ENCODE measurements at regions of chr1 and their contacts with region 1.

Region 1: DNA sequence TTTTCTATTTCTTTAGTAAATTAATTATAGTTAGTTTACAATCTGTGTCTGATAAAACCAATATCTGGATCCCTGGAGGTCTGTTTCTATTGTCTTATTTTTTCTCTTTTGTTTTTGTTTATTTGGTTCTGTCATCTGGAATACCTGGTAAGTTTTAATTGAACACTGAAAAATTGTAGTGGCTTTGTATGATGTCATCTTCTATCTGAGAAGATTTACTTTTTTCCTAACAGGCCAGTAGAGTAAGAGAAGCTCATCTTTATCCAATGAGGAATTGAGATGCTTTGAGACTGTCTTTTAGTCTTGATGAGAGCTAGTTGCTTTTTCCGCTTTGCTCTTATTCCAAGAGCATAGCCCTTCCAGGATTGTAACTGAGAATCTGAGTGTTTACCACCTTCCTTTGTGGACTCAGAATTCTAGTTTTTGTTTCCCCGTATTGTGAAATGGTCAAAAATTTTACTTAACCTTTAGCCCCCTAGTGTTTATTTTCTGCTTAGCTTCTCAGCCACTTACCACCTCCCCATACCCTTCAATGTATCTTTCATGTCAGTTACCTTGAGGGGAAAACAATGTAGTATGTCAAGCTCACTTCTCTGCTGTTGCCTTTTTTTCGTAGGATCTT is 25.0 kb downstream of the PTGFRN start:
- DNase-seq: no peak
- H3K4me3 Mint-ChIP-seq: no peak overlapping the region
- H3K27ac Mint-ChIP-seq: peak overlapping the region; percentile 23
- H3K4me1 Mint-ChIP-seq: peaks cover 34% of the 10 kb centered on the region
- H3K27me3 Mint-ChIP-seq: no peaks in the 10 kb centered on the region

Region 2: GRCh38 chr1:116377541-116378529 is 556.9 kb before region 1 on chr1:
- intact Hi-C with region 1: loop called (anchors 5 kb)
- DNase-seq: peak; percentile 28
- H3K4me3 Mint-ChIP-seq: peak overlapping the region; percentile 78
- H3K27ac Mint-ChIP-seq: peak overlapping the region; percentile 75
- H3K4me1 Mint-ChIP-seq: peaks cover 66% of the 10 kb centered on the region
- H3K27me3 Mint-ChIP-seq: no peaks in the 10 kb centered on the region

Region 3: GRCh38 chr1:116737020-116737854 is 197.5 kb before region 1 on chr1:
- intact Hi-C with region 1: loop called (anchors 1 kb)
- DNase-seq: peak; percentile 70
- H3K4me3 Mint-ChIP-seq: peak overlapping the region; percentile 61
- H3K27ac Mint-ChIP-seq: peak overlapping the region; percentile 100
- H3K4me1 Mint-ChIP-seq: peaks cover 69% of the 10 kb centered on the region
- H3K27me3 Mint-ChIP-seq: no peaks in the 10 kb centered on the region

Region 4: DNA sequence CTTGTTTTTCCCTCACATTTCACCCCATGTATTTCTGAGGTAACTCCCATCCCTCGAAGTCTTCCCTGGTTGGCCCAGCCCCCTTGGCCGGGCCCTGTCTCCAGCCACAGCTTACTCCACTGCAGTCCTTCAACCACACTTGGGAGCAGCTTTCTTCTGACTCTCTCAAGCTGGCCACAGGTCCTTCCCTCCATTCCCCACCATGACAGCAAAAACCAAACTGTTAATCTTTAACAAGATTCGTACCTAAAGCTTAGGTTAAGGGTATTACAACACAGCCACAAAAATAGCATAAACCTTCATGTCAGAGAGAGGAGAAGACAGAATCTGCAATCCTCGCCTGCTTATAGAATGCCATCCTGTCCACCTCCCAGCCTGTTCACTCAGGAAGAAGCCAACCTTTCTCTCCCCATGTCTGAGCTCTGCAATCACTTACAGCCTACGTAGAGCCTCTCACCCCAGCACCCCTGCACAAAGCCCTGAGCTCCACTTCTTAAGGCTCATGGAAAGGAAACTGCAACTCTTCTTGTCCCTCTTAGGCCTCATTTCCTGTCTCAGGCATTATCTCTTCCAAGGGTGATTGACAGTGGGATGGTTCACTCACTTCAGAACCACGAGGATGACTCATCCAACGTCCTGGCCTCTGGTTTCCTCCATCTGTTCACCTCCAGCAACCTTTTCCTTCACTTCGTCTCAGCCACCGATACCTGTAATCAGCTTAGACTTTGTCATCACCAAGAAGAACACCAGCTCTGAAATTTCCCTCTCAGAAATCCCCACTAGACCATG is 107.7 kb before region 1 on chr1:
- intact Hi-C with region 1: loop called (anchors 5 kb)
- DNase-seq: peak; percentile 73
- H3K4me3 Mint-ChIP-seq: peak overlapping the region; percentile 71
- H3K27ac Mint-ChIP-seq: peak overlapping the region; percentile 97
- H3K4me1 Mint-ChIP-seq: peaks cover 64% of the 10 kb centered on the region
- H3K27me3 Mint-ChIP-seq: no peaks in the 10 kb centered on the region

Region 5: DNA sequence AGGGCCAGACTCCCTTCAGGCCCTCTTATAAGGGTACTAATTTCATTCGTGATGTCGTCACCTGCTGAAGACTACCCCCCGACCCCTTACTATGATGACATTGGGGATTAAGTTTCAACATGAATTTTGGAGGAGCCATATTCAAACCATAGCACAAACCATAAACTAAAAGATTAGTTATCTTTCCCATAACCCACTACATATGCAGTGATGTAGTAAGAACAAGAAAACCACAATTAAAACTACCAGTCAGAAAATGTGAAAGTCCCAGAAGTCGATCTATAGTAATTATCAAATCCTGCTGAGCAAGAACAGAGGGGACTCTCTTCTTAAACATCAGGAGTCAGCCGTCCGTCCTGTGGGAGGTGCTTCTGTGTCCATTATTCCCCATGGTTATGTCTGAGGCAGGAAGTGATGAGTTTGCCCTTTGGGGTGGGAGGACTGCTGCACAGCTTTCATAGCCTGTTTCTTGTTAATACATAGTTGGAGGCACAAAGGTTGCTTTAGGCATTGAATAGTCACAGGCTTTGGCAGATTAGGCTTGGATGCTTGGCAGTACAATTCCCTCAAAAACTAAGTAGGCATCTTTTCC is 60.9 kb before region 1 on chr1:
- intact Hi-C with region 1: loop called (anchors 1 kb)
- DNase-seq: no peak
- H3K4me3 Mint-ChIP-seq: peak overlapping the region; percentile 17
- H3K27ac Mint-ChIP-seq: peak overlapping the region; percentile 36
- H3K4me1 Mint-ChIP-seq: peaks cover 25% of the 10 kb centered on the region
- H3K27me3 Mint-ChIP-seq: peaks cover 2% of the 10 kb centered on the region

Region 6: DNA sequence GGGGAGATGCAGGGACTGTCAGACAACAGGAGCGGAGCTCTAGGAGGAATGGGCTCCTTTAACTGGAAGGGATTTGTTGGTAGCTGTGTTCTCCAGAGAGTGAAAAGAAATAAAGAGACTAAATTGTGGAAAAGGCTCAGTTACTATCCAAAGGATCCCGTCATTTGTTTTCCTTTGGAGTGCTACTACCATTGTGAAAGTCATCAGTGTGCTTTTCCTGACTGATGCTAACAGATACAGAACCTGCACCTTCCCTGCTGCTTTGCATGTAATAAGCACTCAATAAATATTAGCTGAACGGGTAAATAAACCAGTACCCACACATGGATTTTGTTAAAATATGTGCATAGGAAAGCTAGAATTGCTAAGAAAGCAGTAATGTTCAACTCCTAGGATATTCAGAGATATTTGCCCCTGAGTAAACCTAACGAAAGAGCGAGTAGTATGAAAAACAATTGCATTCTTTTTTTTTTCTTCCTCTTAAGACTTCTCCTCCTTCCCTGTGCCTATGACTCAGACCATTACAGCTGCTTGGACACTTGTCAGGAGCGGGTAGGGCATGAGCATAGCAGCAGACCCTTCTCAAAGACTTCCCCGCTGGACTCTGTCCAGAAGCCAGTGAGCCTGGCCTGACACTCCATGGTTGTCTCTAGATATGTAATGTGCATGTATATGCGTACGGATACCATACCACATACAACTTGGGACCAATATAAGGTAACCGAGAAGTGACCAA is 16.7 kb after region 1 on chr1:
- intact Hi-C with region 1: no loop called
- DNase-seq: no peak
- H3K4me3 Mint-ChIP-seq: no peak overlapping the region
- H3K27ac Mint-ChIP-seq: no peak overlapping the region
- H3K4me1 Mint-ChIP-seq: peaks cover 3% of the 10 kb centered on the region
- H3K27me3 Mint-ChIP-seq: no peaks in the 10 kb centered on the region

Region 7: DNA sequence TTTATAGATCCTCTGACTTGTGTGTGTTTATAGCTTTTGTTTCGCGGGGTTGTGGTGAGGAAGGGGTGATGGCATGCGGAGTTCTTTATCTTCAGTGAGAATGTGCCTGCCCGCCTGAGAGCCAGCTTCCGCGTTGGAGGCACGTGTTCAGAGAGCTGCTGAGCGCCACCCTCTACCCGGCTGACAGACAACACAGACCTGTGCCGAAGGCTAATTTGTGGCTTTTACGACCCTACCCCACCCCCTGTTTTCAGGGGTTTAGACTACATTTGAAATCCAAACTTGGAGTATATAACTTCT is 52.5 kb after region 1 on chr1:
- intact Hi-C with region 1: loop called (anchors 5 kb)
- DNase-seq: peak; percentile 45
- H3K4me3 Mint-ChIP-seq: peak overlapping the region; percentile 80
- H3K27ac Mint-ChIP-seq: peak overlapping the region; percentile 91
- H3K4me1 Mint-ChIP-seq: peaks cover 37% of the 10 kb centered on the region
- H3K27me3 Mint-ChIP-seq: no peaks in the 10 kb centered on the region

Region 8: DNA sequence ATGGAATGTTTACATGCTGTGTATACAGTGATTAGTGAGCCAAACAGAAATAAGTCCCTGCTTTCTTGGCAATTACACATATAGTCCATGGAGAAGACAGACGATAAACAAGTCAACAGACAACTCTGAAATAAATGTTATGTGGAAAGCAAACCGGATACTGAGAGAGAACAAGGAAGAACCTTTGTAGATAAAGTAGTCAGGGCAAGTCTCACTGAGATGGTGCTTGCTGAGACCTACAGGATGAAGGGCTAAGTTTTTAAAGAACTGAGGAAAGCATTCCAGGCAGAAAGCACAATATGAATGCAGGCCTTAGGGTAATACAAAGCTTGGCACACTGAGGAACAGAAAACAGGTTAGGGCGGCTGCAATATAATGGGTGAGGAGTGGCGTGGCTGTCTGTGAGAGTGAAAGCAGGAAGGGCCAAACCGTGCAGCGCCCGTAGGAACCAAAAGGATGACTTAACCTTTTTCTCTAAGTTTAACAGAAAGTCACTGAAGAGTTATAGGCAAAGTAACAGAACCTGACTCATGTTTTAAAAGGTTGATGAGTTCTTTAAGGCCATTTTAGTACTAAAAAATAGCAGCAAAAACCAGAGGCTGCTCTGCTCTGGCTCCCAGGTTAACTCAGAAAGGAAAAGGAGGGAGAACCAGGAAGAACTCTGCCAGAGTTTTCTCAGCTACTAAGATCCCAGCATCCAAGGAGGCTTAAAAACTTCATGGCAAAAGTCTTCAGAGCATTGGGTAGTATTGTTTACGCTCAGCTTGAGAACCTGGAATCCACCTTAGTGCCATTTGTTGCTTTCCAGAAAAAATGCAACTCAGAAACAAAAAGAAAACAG is 116.7 kb after region 1 on chr1:
- intact Hi-C with region 1: loop called (anchors 2 kb)
- DNase-seq: peak; percentile 33
- H3K4me3 Mint-ChIP-seq: peak overlapping the region; percentile 63
- H3K27ac Mint-ChIP-seq: peak overlapping the region; percentile 88
- H3K4me1 Mint-ChIP-seq: peaks cover 43% of the 10 kb centered on the region
- H3K27me3 Mint-ChIP-seq: no peaks in the 10 kb centered on the region

Measured in activated T-helper 2 cell treated with anti-CD3 and anti-CD28 coated beads, Interferon-gamma antibody, Interleukin-2, Interleukin-4, amounts not matched to agents 10 μg/mL and 5 μg/mL and 100 μg/mL, durations not matched to agents 14 hours and 24 hours and 36 hours (primary cell).